ENCODE measurements at regions of chr18 and their contacts with region 1.

Region 1: DNA sequence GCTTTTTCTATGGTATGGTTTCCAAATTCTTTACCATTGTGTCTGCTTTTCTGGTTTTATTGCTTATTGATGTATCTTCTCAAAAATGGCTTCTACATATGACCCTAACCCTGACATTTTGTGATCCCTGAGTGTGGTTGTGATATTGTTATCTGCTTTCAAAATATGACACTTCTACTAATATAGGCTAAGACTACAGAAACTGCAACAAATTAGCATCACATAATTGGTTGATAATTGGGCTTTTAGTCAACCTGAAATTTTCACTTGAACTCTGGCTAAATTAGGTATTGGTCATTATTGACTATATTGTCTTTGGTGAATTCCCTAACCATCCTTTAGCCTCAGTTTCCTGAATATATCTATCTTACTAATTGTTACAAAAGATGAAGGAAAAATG is 246.1 kb downstream of the PIK3C3 start:
- DNase-seq: no peak
- ATAC-seq: no peak
- H3K4me3 ChIP-seq: no peak overlapping the region
- H3K27ac ChIP-seq: no peak overlapping the region
- H3K4me1 ChIP-seq: no peaks in the 10 kb centered on the region
- H3K27me3 ChIP-seq: no peaks in the 10 kb centered on the region
- CTCF ChIP-seq: no peak

Region 2: GRCh38 chr18:42141439-42141838 is 59.7 kb before region 1 on chr18:
- intact Hi-C with region 1: loop called in 1 of 3 experiments (anchors 10 kb)
- DNase-seq: no peak
- ATAC-seq: no peak
- H3K4me3 ChIP-seq: no peak overlapping the region
- H3K27ac ChIP-seq: no peak overlapping the region
- H3K4me1 ChIP-seq: no peaks in the 10 kb centered on the region
- H3K27me3 ChIP-seq: no peaks in the 10 kb centered on the region
- CTCF ChIP-seq: no peak

Region 3: DNA sequence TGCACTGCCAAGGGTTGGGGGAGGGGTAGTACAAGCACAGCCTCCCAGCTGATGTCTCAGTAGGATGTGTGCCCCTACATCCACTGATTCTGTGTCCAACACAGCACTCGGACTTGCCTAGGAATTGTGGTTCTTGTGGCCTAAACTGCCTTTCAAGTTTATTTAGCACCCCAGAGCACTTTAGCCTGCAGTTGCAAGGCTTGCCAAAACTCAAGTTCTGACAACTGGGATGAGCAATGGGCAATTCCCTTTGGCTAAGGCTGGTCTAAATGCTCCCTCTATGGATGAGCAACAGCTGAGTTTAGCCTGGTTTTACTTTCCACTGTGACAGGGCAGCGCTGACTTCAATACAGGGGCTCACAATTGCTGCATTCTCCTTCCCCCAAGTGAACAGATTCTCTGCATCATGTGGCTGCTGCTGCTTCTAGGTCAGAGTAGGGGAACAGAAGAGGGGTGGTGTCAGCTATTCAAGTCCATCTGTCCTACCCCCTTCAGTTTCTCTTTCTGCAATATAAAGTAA is 225.4 kb after region 1 on chr18:
- intact Hi-C with region 1: no loop called
- DNase-seq: no peak
- ATAC-seq: no peak
- H3K4me3 ChIP-seq: no peak overlapping the region
- H3K27ac ChIP-seq: no peak overlapping the region
- H3K4me1 ChIP-seq: no peaks in the 10 kb centered on the region
- H3K27me3 ChIP-seq: no peaks in the 10 kb centered on the region
- CTCF ChIP-seq: no peak

Region 4: DNA sequence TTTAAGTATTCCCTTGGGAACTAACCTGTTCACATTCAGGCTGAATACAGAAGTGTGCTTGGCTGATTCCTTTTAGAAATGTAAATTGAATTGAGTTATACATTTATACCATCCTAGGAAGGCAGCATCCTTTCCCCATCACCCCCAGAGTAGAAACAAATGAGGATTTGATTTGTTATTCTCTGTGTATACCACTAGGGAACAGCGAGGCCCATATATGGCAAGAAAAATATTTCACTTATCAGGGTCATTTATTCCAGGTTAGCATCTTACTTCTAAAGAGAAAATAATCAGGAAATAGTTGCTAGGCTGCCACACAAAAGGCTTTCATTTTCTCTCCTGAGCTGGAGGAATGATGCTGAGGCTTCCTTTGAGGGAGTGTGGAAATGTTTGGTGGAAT is 270.7 kb after region 1 on chr18:
- intact Hi-C with region 1: no loop called
- DNase-seq: no peak
- ATAC-seq: no peak
- H3K4me3 ChIP-seq: no peak overlapping the region
- H3K27ac ChIP-seq: no peak overlapping the region
- H3K4me1 ChIP-seq: no peaks in the 10 kb centered on the region
- H3K27me3 ChIP-seq: no peaks in the 10 kb centered on the region
- CTCF ChIP-seq: no peak